Activated CD4-positive, alpha-beta T cell treated with anti-CD3 and anti-CD28 coated beads, Interleukin-2, amount 10 ng/mL, durations not matched to agents 7 days and 5 days (primary cell): ENCODE measurements at regions of chr3 and their contacts with region 1.

Region 1: DNA sequence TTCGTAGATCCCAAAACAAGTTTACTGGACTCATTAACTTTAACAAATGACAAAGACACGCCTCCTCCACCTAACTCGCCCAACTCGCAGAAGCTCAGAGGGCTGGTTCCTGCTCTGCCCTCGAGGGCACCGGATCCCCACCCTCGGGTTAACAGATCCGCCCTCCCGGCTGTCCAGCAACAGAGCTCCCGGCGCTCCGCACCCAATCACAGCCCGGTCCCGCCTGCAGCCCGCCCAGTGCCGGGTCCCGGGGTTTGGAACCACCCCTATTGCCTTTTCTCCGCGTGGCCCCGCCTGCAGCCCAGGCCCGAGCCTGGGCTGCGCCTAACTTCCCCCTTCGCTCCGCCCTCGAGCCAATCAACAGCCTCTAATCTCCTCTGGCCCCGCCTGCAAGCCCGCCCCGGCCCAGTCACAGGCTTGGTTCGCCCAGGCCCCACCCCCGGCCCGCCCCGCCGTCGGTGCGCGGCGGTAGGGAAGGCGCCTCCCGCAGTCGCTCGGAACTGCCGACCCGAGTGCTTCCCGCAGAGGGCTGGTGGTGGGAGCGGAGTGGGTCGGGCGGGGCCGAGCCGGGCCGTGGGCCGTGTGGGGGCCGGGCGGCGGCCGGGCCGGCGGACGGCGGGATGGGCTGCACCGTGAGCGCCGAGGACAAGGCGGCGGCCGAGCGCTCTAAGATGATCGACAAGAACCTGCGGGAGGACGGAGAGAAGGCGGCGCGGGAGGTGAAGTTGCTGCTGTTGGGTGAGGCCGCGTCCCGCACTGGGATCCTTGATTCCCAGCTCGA is at the start of gene GNAI2:
- DNase-seq: peak; percentile 99
- H3K4me3 Mint-ChIP-seq: peak within 1 kb of the TSS; percentile 93
- H3K27ac Mint-ChIP-seq: peak within 1 kb of the TSS; percentile 97
- H3K4me1 Mint-ChIP-seq: peaks cover 42% of the 10 kb centered on the region
- H3K27me3 Mint-ChIP-seq: no peaks in the 10 kb centered on the region
- total RNA-seq, gene GNAI2: 489 to 524 TPM

Region 2: DNA sequence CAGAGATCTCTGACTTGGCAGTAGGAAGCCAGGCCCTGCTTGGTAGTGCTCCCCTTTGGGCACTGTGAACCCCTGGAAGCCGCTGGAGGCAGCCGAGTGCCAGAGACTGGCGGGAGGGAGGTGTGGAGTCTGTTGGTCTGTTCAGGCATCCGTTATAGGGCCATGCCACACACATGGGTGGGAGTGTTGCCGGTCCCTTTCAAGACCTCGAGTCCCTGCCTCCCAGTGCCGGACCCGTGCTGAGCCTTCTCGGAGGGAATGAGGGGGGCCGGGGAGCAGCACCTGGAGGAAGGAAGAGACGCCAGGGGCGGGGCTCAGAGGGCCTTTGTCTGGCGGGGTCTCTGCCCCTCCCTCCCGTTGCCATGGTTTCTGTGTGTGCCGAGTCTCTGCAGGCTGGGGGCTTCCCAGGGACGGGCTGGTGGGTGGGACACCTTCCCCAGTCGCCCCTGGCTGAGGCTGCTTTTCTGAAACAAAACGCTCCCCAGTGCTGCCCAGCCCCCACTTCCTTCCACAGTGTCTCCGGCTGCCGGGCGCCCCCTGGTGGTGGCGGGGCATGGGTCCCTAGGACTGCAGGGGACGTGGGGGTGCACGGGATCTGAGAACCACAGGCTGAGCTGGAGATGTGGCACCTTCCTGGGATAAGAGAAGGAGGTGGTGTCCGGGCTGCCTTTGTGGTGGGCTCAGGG is 10.1 kb after region 1 on chr3:
- CTCF ChIA-PET with region 1: interaction called, 212 read pairs
- POLR2A ChIA-PET with region 1: interaction called, 8 read pairs
- DNase-seq: peak; percentile 95
- H3K4me3 Mint-ChIP-seq: peak overlapping the region; percentile 75
- H3K27ac Mint-ChIP-seq: peak overlapping the region; percentile 93
- H3K4me1 Mint-ChIP-seq: peaks cover 74% of the 10 kb centered on the region
- H3K27me3 Mint-ChIP-seq: no peaks in the 10 kb centered on the region